GM18951 (cell line): ENCODE measurements at regions of chr1 and their contacts with region 1.

Region 1: GRCh38 chr1:109643385-109644230 is 12.3 kb upstream of the GSTM4 start:
- POLR2A ChIP-seq: no peak

Region 2: DNA sequence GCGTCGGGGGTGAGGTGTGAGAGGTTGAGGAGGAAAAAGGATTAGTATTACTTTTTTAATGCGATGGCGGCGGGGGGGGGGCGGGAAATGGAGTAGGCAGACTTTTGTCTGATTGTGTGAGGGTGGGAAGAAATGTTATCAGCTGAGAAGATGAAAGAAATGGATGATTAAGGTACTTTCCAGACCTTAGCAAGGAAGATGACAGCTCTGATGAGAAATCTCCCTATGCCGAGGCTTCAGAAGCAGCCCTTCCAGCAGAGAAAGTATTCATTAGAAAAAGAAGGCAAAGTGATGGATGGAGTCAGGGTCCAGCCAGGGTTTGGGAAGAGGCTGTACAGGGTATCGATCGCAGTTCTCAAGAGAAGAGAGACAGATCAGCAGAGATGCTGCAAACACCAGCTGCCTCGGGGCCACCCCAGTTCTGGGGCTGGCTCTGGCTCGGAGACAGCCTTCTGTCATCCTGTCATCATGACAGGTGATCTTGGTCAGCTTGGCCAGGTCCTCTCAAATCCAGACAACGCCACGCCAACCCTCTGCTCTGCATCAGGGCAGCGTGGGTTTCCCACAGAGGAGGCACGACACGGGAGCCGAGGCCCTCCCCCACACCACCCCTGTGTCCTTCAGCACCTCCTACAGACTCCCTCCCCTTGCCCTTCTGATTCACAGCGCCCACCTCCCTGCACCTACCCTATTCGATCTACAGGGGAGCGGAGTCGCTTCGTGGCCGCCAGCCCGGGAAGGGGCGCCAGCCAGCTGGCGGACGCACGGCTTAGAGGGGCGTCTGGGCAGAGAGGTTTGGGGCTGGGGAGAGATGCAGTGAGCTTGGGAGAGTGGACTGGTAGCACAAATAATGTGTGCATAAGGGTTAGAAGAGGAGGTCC is 160.6 kb before region 1 on chr1:
- in situ Hi-C with region 1: no loop called
- POLR2A ChIP-seq: no peak

Region 3: DNA sequence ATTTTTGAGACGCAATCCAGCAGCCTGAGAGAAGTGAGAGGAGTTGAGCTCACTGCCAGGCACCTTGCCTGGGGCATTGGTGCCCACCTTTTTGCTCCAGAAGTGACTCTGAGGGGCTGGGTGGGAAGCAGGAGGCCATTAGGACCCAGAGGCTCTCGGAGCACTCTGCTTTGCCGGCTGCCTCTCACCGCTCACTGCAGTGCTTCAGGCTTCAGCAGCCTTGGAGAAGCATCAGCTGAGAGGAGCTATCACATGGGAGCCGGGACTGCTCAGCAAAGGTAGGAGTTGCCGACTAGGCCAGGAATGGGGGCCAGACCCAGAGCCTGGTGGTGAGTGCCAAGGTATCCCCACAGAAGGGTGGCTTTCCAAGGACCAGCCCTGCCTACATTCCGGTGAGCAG is 103.9 kb before region 1 on chr1 and contains the start of gene GPR61:
- in situ Hi-C with region 1: loop called (anchors 5 kb)
- POLR2A ChIP-seq: no peak

Region 4: GRCh38 chr1:109598655-109599054 is 45.0 kb before region 1 on chr1:
- in situ Hi-C with region 1: no loop called
- POLR2A ChIP-seq: no peak